Aorta (tissue), 5 donors: ENCODE measurements at regions of chr5 and their contacts with region 1.

Region 1: DNA sequence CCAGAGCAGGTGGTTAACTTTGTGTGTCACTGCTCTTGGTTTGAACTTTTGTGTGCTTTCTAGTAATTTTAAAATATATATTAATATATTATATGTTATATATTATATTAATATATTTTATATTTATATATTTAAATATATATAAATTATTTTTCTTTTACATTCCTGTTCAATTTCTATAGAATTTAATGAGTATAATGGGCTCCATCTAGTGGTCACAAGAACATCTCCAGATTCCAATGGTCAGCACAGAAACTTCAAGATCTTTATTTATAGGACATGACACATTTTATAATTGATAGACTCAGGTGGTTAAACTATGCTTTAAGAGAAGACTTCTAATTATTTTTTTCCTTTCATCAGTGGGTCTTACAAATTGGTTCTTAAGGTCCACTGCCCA is 39.1 kb downstream of the COL23A1 start:
- DNase-seq: no peak
- ATAC-seq: no peak
- H3K4me3 ChIP-seq: no peak overlapping the region
- H3K27ac ChIP-seq: no peak overlapping the region
- H3K4me1 ChIP-seq: no peaks in the 10 kb centered on the region
- H3K27me3 ChIP-seq: no peaks in the 10 kb centered on the region

Region 2: DNA sequence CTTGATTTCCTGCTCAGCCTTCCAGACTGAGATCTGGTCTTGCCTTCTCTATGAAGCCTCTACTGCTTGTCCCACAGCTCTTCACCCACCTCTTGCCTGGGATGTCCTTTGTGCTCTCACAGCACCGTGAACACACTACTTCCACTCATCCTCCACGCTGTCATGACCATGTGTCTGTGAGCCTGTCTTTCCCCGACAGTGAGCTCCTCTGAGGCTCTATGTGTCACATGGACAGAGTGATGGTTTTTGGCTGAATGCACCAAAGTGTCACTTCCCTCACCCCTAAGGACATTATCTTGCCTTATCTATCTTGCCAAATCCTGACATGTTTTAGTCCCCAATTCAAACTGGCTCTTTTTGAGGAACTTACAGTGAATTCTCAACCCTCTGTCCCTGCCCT is 329.8 kb before region 1 on chr5:
- intact Hi-C with region 1: no loop called
- DNase-seq: no peak
- ATAC-seq: no peak
- H3K4me3 ChIP-seq: no peak overlapping the region
- H3K27ac ChIP-seq: no peak overlapping the region
- H3K4me1 ChIP-seq: no peaks in the 10 kb centered on the region
- H3K27me3 ChIP-seq: no peaks in the 10 kb centered on the region

Region 3: DNA sequence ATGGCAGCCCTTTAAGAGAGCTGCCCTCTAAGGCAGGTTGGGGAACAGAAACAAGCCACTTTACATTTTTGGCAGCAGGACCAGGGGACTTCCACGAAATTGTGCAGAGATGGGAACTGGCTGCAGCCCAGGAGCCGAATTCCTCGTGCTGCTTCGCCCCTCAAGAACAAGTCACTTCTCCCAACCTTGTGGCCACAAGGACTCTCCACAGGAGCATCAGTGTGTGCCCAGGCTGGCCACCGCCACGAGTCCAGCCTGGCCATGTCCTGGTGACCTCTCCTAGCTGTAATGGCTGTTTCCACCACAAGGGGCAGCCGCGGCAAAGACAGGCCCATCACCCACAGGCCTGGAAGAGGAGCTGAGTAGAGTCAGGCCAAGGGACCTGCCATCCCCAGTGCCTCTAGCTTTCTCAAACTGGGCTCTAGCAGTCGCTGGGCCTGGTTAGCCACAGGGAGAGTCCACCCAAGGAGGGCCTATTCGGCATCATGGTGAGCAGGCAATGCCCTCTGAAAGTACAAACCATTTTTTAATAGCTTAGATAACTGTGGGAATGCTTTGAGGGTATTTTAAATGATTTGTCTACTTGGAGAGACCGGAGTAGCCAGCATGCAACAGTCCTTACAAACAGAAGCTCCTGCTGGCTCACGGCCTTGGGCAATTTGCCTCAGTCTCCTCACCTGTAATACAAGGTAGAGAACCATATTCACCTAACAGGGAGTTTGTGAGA is 89.9 kb before region 1 on chr5:
- intact Hi-C with region 1: loop called in 1 of 2 experiments (anchors 5 kb)
- DNase-seq: peak; percentile 90 to 91
- ATAC-seq: peak; percentile 91
- H3K4me3 ChIP-seq: no peak overlapping the region
- H3K27ac ChIP-seq: no peak overlapping the region
- H3K4me1 ChIP-seq: no peaks in the 10 kb centered on the region
- H3K27me3 ChIP-seq: no peaks in the 10 kb centered on the region

Region 4: DNA sequence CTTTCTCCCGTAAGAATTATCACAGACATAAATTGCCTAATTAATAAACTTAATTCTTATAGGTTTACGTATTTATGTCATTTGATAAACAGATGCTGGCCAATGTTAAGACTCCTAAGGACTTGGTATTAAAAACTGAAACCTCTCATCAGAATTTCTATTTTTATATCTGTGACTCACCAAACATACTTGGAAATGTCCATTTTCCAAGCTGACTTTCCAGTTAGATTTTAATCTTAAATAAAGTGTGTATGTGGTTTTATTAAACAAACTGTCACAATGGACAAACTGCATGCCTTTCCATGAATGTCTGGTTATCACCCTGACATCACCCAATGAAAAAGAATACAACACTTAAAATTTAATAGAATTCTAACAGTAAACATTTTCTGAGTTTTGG is 51.7 kb after region 1 on chr5:
- intact Hi-C with region 1: no loop called
- DNase-seq: no peak
- ATAC-seq: no peak
- H3K4me3 ChIP-seq: no peak overlapping the region
- H3K27ac ChIP-seq: no peak overlapping the region
- H3K4me1 ChIP-seq: no peaks in the 10 kb centered on the region
- H3K27me3 ChIP-seq: no peaks in the 10 kb centered on the region

Region 5: GRCh38 chr5:179313849-179314521 is 762.9 kb after region 1 on chr5:
- intact Hi-C with region 1: no loop called
- DNase-seq: peak; percentile 92 to 95
- ATAC-seq: peak; percentile 92
- H3K4me3 ChIP-seq: no peak overlapping the region
- H3K27ac ChIP-seq: no peak overlapping the region
- H3K4me1 ChIP-seq: no peaks in the 10 kb centered on the region
- H3K27me3 ChIP-seq: no peaks in the 10 kb centered on the region